H1 (cell line): ENCODE measurements at regions of chr10 and their contacts with region 1.

Region 1: GRCh38 chr10:80945264-80945880 is 407.7 kb downstream of the SH2D4B start:
- DNase-seq: peak in 1 of 2 experiments; percentile 10
- H3K4me3 ChIP-seq: no peak overlapping the region
- H3K27ac ChIP-seq: no peak overlapping the region
- H3K4me1 ChIP-seq: peaks cover 0 to 5% (median 0%) of the 10 kb centered on the region in 4 experiments; a peak in 1 of 7 replicates
- H3K27me3 ChIP-seq: no peaks in the 10 kb centered on the region
- CTCF ChIP-seq: peak in 2 of 3 experiments; percentile 96 to 97; a peak in 3 of 4 replicates
- EP300 ChIP-seq: no peak
- POLR2A ChIP-seq: no peak
- RAD21 ChIP-seq: peak; percentile 95 to 98

Region 2: GRCh38 chr10:80957161-80957560 is 11.8 kb after region 1 on chr10:
- CTCF ChIA-PET with region 1: interaction called, 20 read pairs
- POLR2A ChIA-PET with region 1: no interaction called
- DNase-seq: no peak
- H3K4me3 ChIP-seq: no peak overlapping the region
- H3K27ac ChIP-seq: no peak overlapping the region
- H3K4me1 ChIP-seq: no peaks in the 10 kb centered on the region
- H3K27me3 ChIP-seq: no peaks in the 10 kb centered on the region
- CTCF ChIP-seq: no peak
- EP300 ChIP-seq: no peak
- POLR2A ChIP-seq: no peak
- RAD21 ChIP-seq: no peak